WTC11 (cell line): ENCODE measurements at regions of chr10 and their contacts with region 1.

Region 1: DNA sequence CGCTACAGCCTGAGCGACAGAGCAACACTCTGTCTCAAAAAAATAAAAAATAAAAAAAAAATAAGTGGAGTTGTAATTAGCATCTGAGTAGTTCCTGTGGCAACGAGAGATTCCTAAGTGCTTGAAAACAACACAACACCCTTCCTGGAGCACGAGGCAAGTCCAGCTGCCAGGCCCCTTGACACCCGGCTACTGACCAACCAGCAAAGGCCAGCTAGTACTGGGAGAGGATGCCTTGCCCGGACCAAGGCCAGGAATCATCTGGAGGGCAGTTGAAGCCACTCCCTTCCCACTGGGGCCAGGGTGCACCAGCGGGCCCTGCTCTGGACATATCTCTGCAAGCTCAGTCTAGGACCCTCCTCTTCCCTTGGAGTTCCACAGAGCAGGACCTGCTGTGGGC is 536 bp downstream of the C10orf105 start:
- DNase-seq: no peak
- ATAC-seq: no peak
- H3K4me3 Mint-ChIP-seq: no peak overlapping the region
- H3K27ac Mint-ChIP-seq: no peak overlapping the region
- H3K4me1 Mint-ChIP-seq: peaks cover 10% of the 10 kb centered on the region
- H3K27me3 Mint-ChIP-seq: peaks cover 3% of the 10 kb centered on the region; the same call in 1 of the 2 replicates
- CTCF ChIP-seq: no peak

Region 2: GRCh38 chr10:71651928-71652327 is 67.1 kb before region 1 on chr10:
- CTCF ChIA-PET with region 1: no interaction called
- POLR2A ChIA-PET with region 1: no interaction called
- DNase-seq: no peak
- ATAC-seq: no peak
- H3K4me3 Mint-ChIP-seq: no peak overlapping the region
- H3K27ac Mint-ChIP-seq: no peak overlapping the region
- H3K4me1 Mint-ChIP-seq: peaks cover 56% of the 10 kb centered on the region
- H3K27me3 Mint-ChIP-seq: peaks cover 37% of the 10 kb centered on the region
- CTCF ChIP-seq: no peak

Region 3: GRCh38 chr10:71748671-71749191 is 29.7 kb after region 1 on chr10:
- CTCF ChIA-PET with region 1: interaction called, 10 read pairs
- POLR2A ChIA-PET with region 1: interaction called, 3 read pairs
- DNase-seq: no peak
- ATAC-seq: peak; percentile 43
- H3K4me3 Mint-ChIP-seq: no peak overlapping the region
- H3K27ac Mint-ChIP-seq: no peak overlapping the region
- H3K4me1 Mint-ChIP-seq: peaks cover 21% of the 10 kb centered on the region
- H3K27me3 Mint-ChIP-seq: no peaks in the 10 kb centered on the region
- CTCF ChIP-seq: no peak